Caco-2 (cell line): ENCODE measurements at regions of chr19 and their contacts with region 1.

Region 1: GRCh38 chr19:42794765-42795164 is 29.3 kb upstream of the PSG8 start:
- DNase-seq: no peak
- H3K4me3 ChIP-seq: no peak overlapping the region
- H3K4me3 Mint-ChIP-seq: no peak overlapping the region
- H3K27ac Mint-ChIP-seq: no peak overlapping the region
- H3K4me1 ChIP-seq: no peaks in the 10 kb centered on the region; the same call in 1 of the 2 replicates
- H3K4me1 Mint-ChIP-seq: no peaks in the 10 kb centered on the region
- H3K27me3 ChIP-seq: no peaks in the 10 kb centered on the region
- H3K27me3 Mint-ChIP-seq: no peaks in the 10 kb centered on the region
- CTCF ChIP-seq: no peak

Region 2: GRCh38 chr19:42440357-42441048 is 354.3 kb before region 1 on chr19:
- CTCF ChIA-PET with region 1: no interaction called
- POLR2A ChIA-PET with region 1: no interaction called
- intact Hi-C with region 1: no loop called
- DNase-seq: peak; percentile 72 to 82
- H3K4me3 ChIP-seq: no peak overlapping the region
- H3K4me3 Mint-ChIP-seq: peak overlapping the region; percentile 20
- H3K27ac Mint-ChIP-seq: peak overlapping the region; percentile 61
- H3K4me1 ChIP-seq: peaks cover 55% of the 10 kb centered on the region
- H3K4me1 Mint-ChIP-seq: peaks cover 42% of the 10 kb centered on the region
- H3K27me3 ChIP-seq: no peaks in the 10 kb centered on the region
- H3K27me3 Mint-ChIP-seq: no peaks in the 10 kb centered on the region
- CTCF ChIP-seq: peak; percentile 88 to 96

Region 3: GRCh38 chr19:42881229-42881628 is 86.5 kb after region 1 on chr19:
- CTCF ChIA-PET with region 1: no interaction called
- POLR2A ChIA-PET with region 1: no interaction called
- intact Hi-C with region 1: loop called (anchors 1 kb)
- DNase-seq: no peak
- H3K4me3 ChIP-seq: no peak overlapping the region
- H3K4me3 Mint-ChIP-seq: no peak overlapping the region
- H3K27ac Mint-ChIP-seq: no peak overlapping the region
- H3K4me1 ChIP-seq: peaks cover 10% of the 10 kb centered on the region
- H3K4me1 Mint-ChIP-seq: peaks cover 10% of the 10 kb centered on the region
- H3K27me3 ChIP-seq: no peaks in the 10 kb centered on the region
- H3K27me3 Mint-ChIP-seq: no peaks in the 10 kb centered on the region
- CTCF ChIP-seq: peak; percentile 28 to 40